ENCODE measurements at regions of chr11 and their contacts with region 1.

Region 1: GRCh38 chr11:73335204-73335923 is 27.3 kb downstream of the ARHGEF17 start:
- DNase-seq: peak; percentile 55
- H3K4me3 ChIP-seq: no peak overlapping the region
- H3K27ac ChIP-seq: no peak overlapping the region
- H3K4me1 ChIP-seq: peaks cover 17% of the 10 kb centered on the region
- H3K27me3 ChIP-seq: no peaks in the 10 kb centered on the region
- CTCF ChIP-seq: peak; percentile 98 to 99

Region 2: DNA sequence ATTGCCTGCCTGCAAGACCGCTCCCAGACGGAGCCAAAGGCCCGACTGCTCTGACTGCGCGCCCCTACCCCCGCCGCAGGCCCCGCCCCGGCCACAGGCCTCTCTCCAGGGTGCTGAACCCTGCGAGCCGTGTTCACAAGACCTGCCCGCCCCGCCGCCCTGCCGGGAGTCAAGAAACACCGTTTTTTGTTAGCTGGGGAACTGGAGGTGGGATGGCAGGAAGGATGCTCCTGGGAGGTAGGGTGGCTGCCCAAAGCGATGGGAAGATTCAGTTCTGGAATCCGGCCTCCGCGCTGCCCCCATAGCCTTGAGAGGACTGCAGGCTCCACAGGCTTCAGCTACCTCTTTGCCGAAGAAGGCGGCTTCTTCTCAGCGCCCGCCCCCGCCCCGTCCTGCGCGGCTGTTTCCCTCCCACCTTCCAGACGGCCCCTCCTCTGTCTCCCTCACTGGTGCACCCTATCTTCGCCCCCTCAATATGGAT is 658.5 kb before region 1 on chr11:
- CTCF ChIA-PET with region 1: no interaction called
- dilution Hi-C with region 1: no loop called
- in situ Hi-C with region 1: no loop called
- intact Hi-C with region 1: no loop called
- DNase-seq: peak; percentile 32
- H3K4me3 ChIP-seq: no peak overlapping the region
- H3K27ac ChIP-seq: no peak overlapping the region
- H3K4me1 ChIP-seq: peaks cover 4% of the 10 kb centered on the region
- H3K27me3 ChIP-seq: peaks cover 6% of the 10 kb centered on the region
- CTCF ChIP-seq: no peak

Region 3: DNA sequence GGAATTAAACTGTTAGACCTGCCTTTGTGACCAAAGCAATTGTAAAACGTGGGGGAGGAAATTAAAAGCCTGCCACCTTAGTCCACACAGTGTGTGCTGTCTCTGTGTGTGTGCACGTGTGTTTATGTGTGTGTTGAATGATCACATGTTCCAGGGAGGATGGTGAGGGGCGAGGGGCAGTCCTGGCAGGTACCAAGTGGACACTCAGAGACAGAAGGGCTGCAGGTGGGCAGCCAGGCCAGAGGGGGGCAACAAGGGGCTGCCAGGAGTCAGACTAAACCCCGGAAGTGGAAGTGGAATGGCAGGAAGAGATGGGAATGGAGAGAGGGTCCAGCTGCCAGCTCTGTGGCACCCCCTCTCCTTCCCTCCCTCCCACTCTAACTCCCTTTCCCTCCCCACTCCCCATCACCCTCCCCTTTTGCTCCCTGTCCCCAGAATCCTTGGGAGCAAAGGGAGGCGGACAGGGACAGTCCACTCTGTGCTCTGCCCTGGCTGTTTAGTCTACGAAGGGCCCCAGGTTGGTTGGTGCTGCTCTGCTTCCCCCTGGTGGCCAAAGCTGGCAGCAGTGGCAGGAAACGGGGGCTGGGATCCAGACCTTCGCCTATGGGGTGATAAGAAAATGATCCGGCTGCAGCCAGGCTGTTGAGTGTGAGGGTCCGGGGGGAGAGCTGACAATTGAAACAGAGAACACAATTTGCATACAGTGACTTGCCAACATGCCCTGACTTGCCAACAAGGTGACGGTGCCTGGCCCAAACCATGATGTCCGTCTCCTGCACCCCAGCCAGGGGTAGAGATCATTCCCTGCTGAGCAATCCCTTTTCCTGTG is 92.9 kb before region 1 on chr11:
- CTCF ChIA-PET with region 1: no interaction called
- dilution Hi-C with region 1: no loop called
- in situ Hi-C with region 1: no loop called
- intact Hi-C with region 1: no loop called
- DNase-seq: peak; percentile 63
- H3K4me3 ChIP-seq: no peak overlapping the region
- H3K27ac ChIP-seq: no peak overlapping the region
- H3K4me1 ChIP-seq: peaks cover 45% of the 10 kb centered on the region
- H3K27me3 ChIP-seq: no peaks in the 10 kb centered on the region
- CTCF ChIP-seq: peak; percentile 96 to 99

Region 4: GRCh38 chr11:73280651-73281071 is 54.7 kb before region 1 on chr11:
- CTCF ChIA-PET with region 1: no interaction called
- dilution Hi-C with region 1: loop called (anchors 5 kb)
- in situ Hi-C with region 1: no loop called
- intact Hi-C with region 1: no loop called
- DNase-seq: no peak
- H3K4me3 ChIP-seq: no peak overlapping the region
- H3K27ac ChIP-seq: no peak overlapping the region
- H3K4me1 ChIP-seq: peaks cover 8% of the 10 kb centered on the region
- H3K27me3 ChIP-seq: no peaks in the 10 kb centered on the region
- CTCF ChIP-seq: no peak

Region 5: DNA sequence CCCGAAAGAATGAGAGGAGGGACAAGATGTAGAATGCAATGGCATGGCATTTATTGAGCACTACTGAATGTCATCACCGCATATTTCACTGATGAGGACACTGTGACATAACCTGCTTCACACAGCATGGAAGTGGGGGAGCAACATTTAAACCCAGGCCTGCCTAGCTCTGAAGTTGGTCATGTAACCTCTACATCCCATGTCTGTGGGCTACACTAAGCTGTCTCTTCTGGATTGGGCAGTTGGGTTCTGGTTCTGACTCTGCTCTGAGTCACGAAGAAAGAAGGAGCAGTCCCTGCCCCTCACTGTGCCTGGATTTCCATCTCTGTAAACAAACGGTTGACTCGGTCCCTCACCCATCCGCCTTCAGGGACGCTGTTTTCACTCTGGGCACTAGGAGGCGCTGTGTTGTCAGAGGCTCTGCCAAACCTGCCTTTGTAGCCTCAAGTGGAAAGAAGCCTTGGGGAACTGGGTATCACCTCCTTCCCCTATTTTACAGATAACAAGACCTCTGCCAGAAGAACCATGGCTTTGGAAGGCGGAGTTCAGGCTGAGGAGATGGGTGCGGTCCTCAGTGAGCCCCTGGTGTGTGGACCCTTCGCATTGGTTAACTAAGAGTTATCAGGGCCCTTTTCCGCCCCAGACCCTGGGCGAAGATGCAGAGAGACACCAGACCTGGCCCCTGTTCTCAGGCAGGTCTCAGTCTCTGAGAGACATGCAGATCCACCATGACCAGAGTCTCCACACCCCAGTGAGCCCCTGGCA is 40.0 kb before region 1 on chr11:
- CTCF ChIA-PET with region 1: no interaction called
- dilution Hi-C with region 1: no loop called
- in situ Hi-C with region 1: loop called in 1 of 2 experiments (anchors 5 kb)
- intact Hi-C with region 1: loop called (anchors 1 kb)
- DNase-seq: peak; percentile 70
- H3K4me3 ChIP-seq: no peak overlapping the region
- H3K27ac ChIP-seq: no peak overlapping the region
- H3K4me1 ChIP-seq: no peaks in the 10 kb centered on the region
- H3K27me3 ChIP-seq: no peaks in the 10 kb centered on the region
- CTCF ChIP-seq: peak; percentile 97 to 99

Region 6: DNA sequence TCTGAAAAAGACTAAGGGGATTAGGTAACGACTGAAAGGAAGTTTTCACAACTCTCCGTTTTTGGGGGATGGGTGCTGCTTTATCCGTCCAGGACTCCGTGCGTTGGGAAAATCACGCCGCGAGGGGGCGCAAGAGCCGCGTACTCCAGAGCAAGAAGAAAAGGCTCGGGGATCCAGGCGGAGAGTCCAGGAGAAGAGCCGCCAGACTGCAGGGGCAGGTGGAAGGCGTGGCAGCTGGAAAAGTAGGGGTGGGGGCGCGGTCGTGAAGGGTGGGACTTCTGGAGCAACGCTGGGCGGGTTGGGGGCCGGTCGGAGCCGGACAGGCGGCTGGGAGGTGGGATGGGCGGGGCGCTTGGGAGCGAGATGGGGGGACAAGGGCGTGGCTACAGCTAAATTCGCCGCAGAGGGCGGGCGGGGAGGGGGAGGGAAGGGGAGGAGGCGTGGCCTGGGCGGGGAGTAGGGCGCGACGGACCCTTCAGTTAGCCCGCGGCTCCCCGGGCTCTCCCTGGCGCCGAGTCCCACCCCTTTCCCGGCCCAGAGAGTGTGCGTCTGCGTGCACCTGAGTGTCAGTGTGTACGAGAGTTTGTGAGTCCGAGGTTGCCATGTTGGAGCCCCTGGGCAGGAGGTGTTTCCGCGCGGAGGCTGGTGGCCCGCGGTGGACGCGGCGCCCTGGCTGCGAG is 27.9 kb before region 1 on chr11:
- CTCF ChIA-PET with region 1: interaction called, 8 read pairs
- dilution Hi-C with region 1: no loop called
- in situ Hi-C with region 1: loop called in 1 of 2 experiments (anchors 5 kb)
- intact Hi-C with region 1: loop called (anchors 1 kb)
- DNase-seq: peak; percentile 94
- H3K4me3 ChIP-seq: peak overlapping the region; percentile 54 to 65 (median 57)
- H3K27ac ChIP-seq: peak overlapping the region; percentile 45
- H3K4me1 ChIP-seq: peaks cover 43% of the 10 kb centered on the region
- H3K27me3 ChIP-seq: no peaks in the 10 kb centered on the region
- CTCF ChIP-seq: peak; percentile 69 to 91

Region 7: GRCh38 chr11:73404048-73404447 is 68.7 kb after region 1 on chr11:
- CTCF ChIA-PET with region 1: no interaction called
- dilution Hi-C with region 1: loop called (anchors 5 kb)
- in situ Hi-C with region 1: no loop called
- intact Hi-C with region 1: no loop called
- DNase-seq: peak; percentile 31
- H3K4me3 ChIP-seq: no peak overlapping the region
- H3K27ac ChIP-seq: no peak overlapping the region
- H3K4me1 ChIP-seq: no peaks in the 10 kb centered on the region
- H3K27me3 ChIP-seq: no peaks in the 10 kb centered on the region
- CTCF ChIP-seq: peak; percentile 54 to 56

Measured in mammary epithelial cell (primary cell).